ENCODE measurements at regions of chr2 and their contacts with region 1.

Region 1: GRCh38 chr2:85340034-85340892 is 12.5 kb upstream of the TGOLN2 start:
- DNase-seq: no peak
- H3K4me3 ChIP-seq: no peak overlapping the region
- H3K4me3 Mint-ChIP-seq: no peak overlapping the region
- H3K27ac ChIP-seq: no peak overlapping the region
- H3K27ac Mint-ChIP-seq: peak overlapping the region in 1 of 8 donors; percentile 85
- H3K4me1 ChIP-seq: no peaks in the 10 kb centered on the region
- H3K4me1 Mint-ChIP-seq: peaks cover 0 to 4% (median 0%) of the 10 kb centered on the region in 3 donors
- H3K27me3 ChIP-seq: no peaks in the 10 kb centered on the region
- H3K27me3 Mint-ChIP-seq: no peaks in the 10 kb centered on the region

Region 2: GRCh38 chr2:85390941-85391669 is 50.8 kb after region 1 on chr2:
- CTCF ChIA-PET with region 1: no interaction called
- POLR2A ChIA-PET with region 1: interaction called, 11 read pairs
- DNase-seq: peak; percentile 48 to 73 (median 57)
- H3K4me3 ChIP-seq: no peak overlapping the region
- H3K4me3 Mint-ChIP-seq: no peak overlapping the region
- H3K27ac ChIP-seq: no peak overlapping the region
- H3K27ac Mint-ChIP-seq: peak overlapping the region in 2 of 8 donors; percentile 69 to 75
- H3K4me1 ChIP-seq: peaks cover 8% of the 10 kb centered on the region
- H3K4me1 Mint-ChIP-seq: peaks cover 5 to 7% (median 5%) of the 10 kb centered on the region in 3 donors
- H3K27me3 ChIP-seq: no peaks in the 10 kb centered on the region
- H3K27me3 Mint-ChIP-seq: no peaks in the 10 kb centered on the region

Measured in CD8-positive, alpha-beta memory T cell (primary cell).